ENCODE measurements at regions of chr11 and their contacts with region 1.

Region 1: GRCh38 chr11:33329705-33330329 is 72.6 kb downstream of the HIPK3 start:
- DNase-seq: peak; percentile 34
- CTCF ChIP-seq: peak; percentile 62

Region 2: GRCh38 chr11:32960553-32961164 is 369.2 kb before region 1 on chr11:
- in situ Hi-C with region 1: loop called (anchors 25 kb)
- DNase-seq: peak; percentile 24
- CTCF ChIP-seq: peak; percentile 57

Region 3: GRCh38 chr11:33161120-33162005 is 168.5 kb before region 1 on chr11 and contains the start of gene CSTF3:
- in situ Hi-C with region 1: loop called (anchors 10 kb)
- DNase-seq: peak; percentile 87
- CTCF ChIP-seq: no peak